HEK293 (cell line): ENCODE measurements at regions of chr17 and their contacts with region 1.

Region 1: DNA sequence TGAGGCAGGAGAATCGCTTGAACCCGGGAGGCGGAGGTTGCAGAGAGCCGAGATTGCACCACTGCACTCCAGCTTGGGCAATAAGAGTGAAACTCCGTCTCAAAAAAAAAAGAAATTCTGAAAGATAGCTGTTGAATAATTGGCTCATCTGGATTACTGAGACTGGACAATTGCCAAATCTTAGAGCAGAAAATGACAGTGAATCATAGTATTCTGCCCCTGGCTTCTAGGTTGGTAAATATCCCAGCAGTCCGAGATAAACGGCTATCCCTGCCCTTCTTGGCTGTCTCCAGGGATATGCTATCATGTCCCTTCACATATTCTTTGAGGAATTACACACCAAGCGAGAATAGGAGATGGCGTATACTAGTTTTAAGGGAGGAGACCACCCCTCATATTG is 35.5 kb upstream of the METTL16 start:
- H3K4me3 ChIP-seq: no peak overlapping the region
- H3K27ac ChIP-seq: no peak overlapping the region
- H3K4me1 ChIP-seq: no peaks in the 10 kb centered on the region
- CTCF ChIP-seq: no peak

Region 2: DNA sequence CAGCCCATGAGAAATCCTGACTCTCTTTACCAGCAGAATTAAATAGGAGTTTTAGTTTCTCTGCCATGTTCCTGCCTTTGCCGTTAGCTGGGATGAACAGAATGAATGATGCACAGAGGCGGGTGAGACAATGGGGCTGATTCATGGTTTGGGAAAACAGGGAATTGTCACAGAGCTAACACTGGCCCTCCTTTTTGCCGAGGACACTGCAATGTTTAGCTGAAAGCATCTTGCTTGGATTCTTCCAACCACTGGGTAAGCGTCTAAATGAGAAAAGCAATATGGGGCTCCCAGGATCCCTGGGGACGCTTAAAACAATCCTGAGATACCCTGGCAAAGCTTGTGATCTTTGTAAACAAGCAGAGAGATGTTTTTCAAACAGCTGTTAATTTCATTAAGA is 33.5 kb after region 1 on chr17:
- CTCF ChIA-PET with region 1: no interaction called
- POLR2A ChIA-PET with region 1: no interaction called
- H3K4me3 ChIP-seq: no peak overlapping the region
- H3K27ac ChIP-seq: no peak overlapping the region
- H3K4me1 ChIP-seq: no peaks in the 10 kb centered on the region
- CTCF ChIP-seq: no peak

Region 3: GRCh38 chr17:2592971-2593820 is 46.0 kb after region 1 on chr17 and contains the start of gene PAFAH1B1:
- CTCF ChIA-PET with region 1: no interaction called
- POLR2A ChIA-PET with region 1: interaction called, 10 read pairs
- H3K4me3 ChIP-seq: peak within 1 kb of the TSS; percentile 95
- H3K27ac ChIP-seq: peak within 1 kb of the TSS; percentile 99
- H3K4me1 ChIP-seq: peaks cover 16% of the 10 kb centered on the region
- CTCF ChIP-seq: peak; percentile 77